CD8-positive, alpha-beta T cell (primary cell): ENCODE measurements at regions of chr16 and their contacts with region 1.

Region 1: GRCh38 chr16:3400779-3401688 is at the starts of genes ZNF174 and ZSCAN32:
- DNase-seq: peak; percentile 96 to 100 (median 99)
- ATAC-seq: peak; percentile 97
- H3K4me3 ChIP-seq: peak within 1 kb of the TSS; percentile 64 to 89
- H3K4me3 Mint-ChIP-seq: peak within 1 kb of the TSS; percentile 88
- H3K27ac ChIP-seq: peak within 1 kb of the TSS; percentile 77 to 81
- H3K27ac Mint-ChIP-seq: peak within 1 kb of the TSS; percentile 93
- H3K4me1 ChIP-seq: peaks cover 42% of the 10 kb centered on the region
- H3K4me1 Mint-ChIP-seq: peaks cover 63% of the 10 kb centered on the region
- H3K27me3 ChIP-seq: no peaks in the 10 kb centered on the region
- H3K27me3 Mint-ChIP-seq: no peaks in the 10 kb centered on the region
- CTCF ChIP-seq: no peak
- total RNA-seq, gene ZNF174: 4.5 to 6.4 TPM
- total RNA-seq, gene ZSCAN32: 10.4 to 12.7 TPM

Region 2: GRCh38 chr16:3123986-3124886 is 276.8 kb before region 1 on chr16:
- CTCF ChIA-PET with region 1: interaction called, 5 read pairs
- POLR2A ChIA-PET with region 1: no interaction called
- intact Hi-C with region 1: loop called in 1 of 2 experiments (anchors 1 kb)
- DNase-seq: peak; percentile 88 to 98 (median 97)
- ATAC-seq: peak; percentile 90
- H3K4me3 ChIP-seq: peak overlapping the region; percentile 72 to 89
- H3K4me3 Mint-ChIP-seq: peak overlapping the region; percentile 98
- H3K27ac ChIP-seq: peak overlapping the region; percentile 44 to 72
- H3K27ac Mint-ChIP-seq: peak overlapping the region; percentile 95
- H3K4me1 ChIP-seq: peaks cover 30% of the 10 kb centered on the region
- H3K4me1 Mint-ChIP-seq: peaks cover 45% of the 10 kb centered on the region
- H3K27me3 ChIP-seq: no peaks in the 10 kb centered on the region
- H3K27me3 Mint-ChIP-seq: no peaks in the 10 kb centered on the region
- CTCF ChIP-seq: no peak

Region 3: DNA sequence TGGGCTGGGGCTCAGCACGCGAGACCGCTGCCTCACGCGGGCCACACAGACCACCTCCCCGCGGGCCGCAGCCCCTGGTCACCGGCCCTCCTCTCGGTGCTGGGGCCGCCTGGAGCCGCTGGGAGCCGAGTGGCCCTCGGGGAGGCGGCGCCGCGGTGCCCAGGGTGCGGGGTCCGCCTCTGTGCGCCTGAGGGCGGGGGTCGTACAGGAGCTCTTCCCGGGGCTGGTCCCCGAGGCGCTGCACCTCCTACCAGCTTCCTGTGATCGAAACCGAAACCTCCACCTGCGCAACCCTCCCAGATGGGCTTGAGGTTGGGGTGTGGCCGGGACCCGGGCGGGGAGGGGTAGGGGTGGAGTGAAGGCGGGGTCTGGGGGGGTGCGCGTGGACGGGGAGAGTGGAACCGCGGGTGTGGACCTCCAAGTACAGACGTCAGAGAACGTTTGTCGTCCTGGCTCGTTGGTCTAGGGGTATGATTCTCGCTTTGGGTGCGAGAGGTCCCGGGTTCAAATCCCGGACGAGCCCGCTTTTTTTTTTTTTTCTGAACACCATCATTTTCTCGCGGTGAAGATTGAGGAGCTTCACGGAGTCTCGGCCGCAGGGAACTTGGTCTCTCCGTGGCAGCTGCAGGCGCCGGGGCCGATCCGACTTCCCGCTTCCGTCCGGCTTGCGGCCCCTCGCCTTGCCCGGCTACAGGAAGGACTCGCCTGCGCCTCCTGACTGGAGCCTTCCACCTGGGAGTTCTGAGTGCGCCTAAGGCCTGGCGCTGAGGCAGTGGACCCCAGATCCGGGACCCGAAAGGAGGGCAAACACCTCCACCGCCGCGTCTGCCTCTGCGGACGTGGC is 242.3 kb before region 1 on chr16:
- CTCF ChIA-PET with region 1: no interaction called
- POLR2A ChIA-PET with region 1: interaction called, 8 read pairs
- intact Hi-C with region 1: loop called in 1 of 2 experiments (anchors 2 kb)
- DNase-seq: peak; percentile 91 to 98 (median 95)
- ATAC-seq: peak; percentile 91
- H3K4me3 ChIP-seq: peak overlapping the region; percentile 80 to 97
- H3K4me3 Mint-ChIP-seq: peak overlapping the region; percentile 90
- H3K27ac ChIP-seq: peak overlapping the region; percentile 70 to 78
- H3K27ac Mint-ChIP-seq: peak overlapping the region; percentile 94
- H3K4me1 ChIP-seq: peaks cover 23% of the 10 kb centered on the region
- H3K4me1 Mint-ChIP-seq: peaks cover 15% of the 10 kb centered on the region
- H3K27me3 ChIP-seq: no peaks in the 10 kb centered on the region
- H3K27me3 Mint-ChIP-seq: no peaks in the 10 kb centered on the region
- CTCF ChIP-seq: no peak

Region 4: DNA sequence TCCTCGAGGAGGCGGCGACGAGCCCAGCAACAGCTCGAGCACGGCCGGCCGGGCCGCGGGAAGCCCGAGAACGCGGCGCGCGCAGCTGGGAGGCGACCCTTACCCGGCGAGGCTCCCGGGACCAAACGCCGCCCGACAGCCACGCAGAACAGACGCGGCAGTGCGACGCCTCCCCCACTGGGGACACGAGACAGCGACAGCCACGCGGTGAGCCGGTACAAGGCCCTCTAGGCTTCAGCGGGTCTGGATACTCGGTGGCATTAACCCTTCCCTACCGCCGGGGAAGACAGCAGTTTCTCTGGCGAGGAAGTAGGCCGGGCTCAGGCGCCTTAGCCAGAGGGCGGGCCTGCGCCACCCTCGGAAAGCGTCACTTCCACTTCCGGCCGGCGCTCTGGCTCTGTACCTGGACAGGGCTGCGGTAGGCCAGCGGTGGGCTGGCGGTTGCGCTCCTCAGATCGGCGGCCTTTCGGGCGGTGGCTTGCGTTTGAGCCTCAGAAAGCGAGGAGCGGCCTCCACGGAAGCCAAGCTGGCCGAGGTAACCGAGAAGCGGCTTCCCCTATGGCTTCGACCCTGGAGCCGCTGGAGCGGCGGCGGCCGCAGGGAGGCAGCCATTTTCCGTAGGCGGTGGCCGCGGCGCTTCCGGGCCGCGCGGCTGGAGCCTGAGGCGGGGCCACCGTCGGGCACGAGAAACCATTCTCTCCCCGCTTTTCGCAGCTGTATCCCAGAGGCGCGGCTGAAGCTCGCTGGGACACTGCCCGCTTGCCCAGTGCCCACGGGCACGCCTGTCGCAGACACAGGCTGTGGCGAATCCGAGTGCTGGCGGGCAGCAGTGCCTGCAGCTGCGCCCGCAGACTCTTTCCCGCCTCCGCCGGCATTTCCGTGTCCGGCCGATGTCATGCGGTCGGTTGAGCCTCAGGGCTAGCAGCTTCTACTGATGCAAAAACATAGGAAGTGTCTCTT is 95.6 kb before region 1 on chr16 and contains the starts of genes TIGD7 and ZNF75A:
- CTCF ChIA-PET with region 1: no interaction called
- POLR2A ChIA-PET with region 1: interaction called, 7 read pairs
- intact Hi-C with region 1: loop called (anchors 1 kb)
- DNase-seq: peak; percentile 60 to 94 (median 83)
- ATAC-seq: peak; percentile 97
- H3K4me3 ChIP-seq: peak within 1 kb of the TSS; percentile 90 to 93
- H3K4me3 Mint-ChIP-seq: peak within 1 kb of the TSS; percentile 83
- H3K27ac ChIP-seq: peak within 1 kb of the TSS; percentile 86 to 91
- H3K27ac Mint-ChIP-seq: peak within 1 kb of the TSS; percentile 90
- H3K4me1 ChIP-seq: peaks cover 14% of the 10 kb centered on the region
- H3K4me1 Mint-ChIP-seq: peaks cover 30% of the 10 kb centered on the region
- H3K27me3 ChIP-seq: no peaks in the 10 kb centered on the region
- H3K27me3 Mint-ChIP-seq: no peaks in the 10 kb centered on the region
- CTCF ChIP-seq: no peak
- total RNA-seq, gene TIGD7: 4.1 to 4.2 TPM
- total RNA-seq, gene ZNF75A: 59.6 to 61.3 TPM

Region 5: DNA sequence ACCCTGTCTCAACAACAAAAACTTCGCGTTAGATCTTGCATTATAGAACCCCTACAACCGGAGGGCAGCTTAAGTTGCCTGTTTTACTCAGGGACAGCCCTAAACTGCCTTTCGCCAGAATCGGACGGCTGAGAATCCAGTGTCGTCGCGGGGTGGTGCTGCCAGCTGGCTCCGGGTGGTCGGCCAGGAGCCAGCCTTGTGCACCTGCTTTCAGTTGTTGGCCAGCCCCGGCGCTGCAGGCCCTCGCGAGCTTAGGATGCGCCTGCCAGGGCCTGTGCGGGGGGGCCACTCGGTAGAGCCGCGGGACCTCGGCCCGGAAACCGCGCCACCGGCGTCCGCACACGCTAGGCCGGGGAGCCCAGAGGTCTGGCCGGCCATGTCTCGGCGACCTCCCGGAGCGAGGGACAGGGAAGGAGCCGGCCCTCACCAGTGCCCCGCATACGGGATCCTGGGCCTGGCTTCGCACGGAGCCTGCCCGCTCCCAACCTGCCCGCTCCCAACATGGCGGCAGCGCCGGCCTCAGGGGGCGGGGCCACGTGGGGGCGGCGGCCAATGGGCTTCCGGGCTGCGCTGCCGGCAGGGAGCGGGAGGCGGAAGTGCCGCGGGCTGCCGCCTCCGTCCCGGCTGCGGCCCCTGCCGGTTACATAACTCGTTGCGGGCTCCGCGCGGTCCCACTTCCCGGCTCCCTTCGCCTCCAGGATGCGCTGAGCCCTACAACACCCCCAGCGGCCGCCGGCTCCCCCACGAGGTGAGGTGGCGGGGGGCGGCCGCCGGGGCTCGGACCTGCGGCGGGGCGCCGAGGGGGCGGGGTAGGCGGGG is 56.6 kb after region 1 on chr16:
- CTCF ChIA-PET with region 1: no interaction called
- POLR2A ChIA-PET with region 1: interaction called, 13 read pairs
- intact Hi-C with region 1: loop called (anchors 1 kb)
- DNase-seq: peak; percentile 78 to 96 (median 90)
- ATAC-seq: peak; percentile 84
- H3K4me3 ChIP-seq: peak overlapping the region; percentile 71 to 72
- H3K4me3 Mint-ChIP-seq: peak overlapping the region; percentile 85
- H3K27ac ChIP-seq: peak overlapping the region; percentile 76 to 89
- H3K27ac Mint-ChIP-seq: peak overlapping the region; percentile 93
- H3K4me1 ChIP-seq: peaks cover 42% of the 10 kb centered on the region
- H3K4me1 Mint-ChIP-seq: peaks cover 52% of the 10 kb centered on the region
- H3K27me3 ChIP-seq: no peaks in the 10 kb centered on the region
- H3K27me3 Mint-ChIP-seq: no peaks in the 10 kb centered on the region
- CTCF ChIP-seq: peak; percentile 49

Region 6: GRCh38 chr16:3717235-3718018 is 316.4 kb after region 1 on chr16 and contains the start of gene TRAP1:
- CTCF ChIA-PET with region 1: no interaction called
- POLR2A ChIA-PET with region 1: interaction called, 3 read pairs
- intact Hi-C with region 1: loop called in 1 of 2 experiments (anchors 2 kb)
- DNase-seq: peak; percentile 85 to 96 (median 91)
- ATAC-seq: peak; percentile 97
- H3K4me3 ChIP-seq: peak within 1 kb of the TSS; percentile 94 to 96
- H3K4me3 Mint-ChIP-seq: peak within 1 kb of the TSS; percentile 91
- H3K27ac ChIP-seq: peak within 1 kb of the TSS; percentile 84 to 88
- H3K27ac Mint-ChIP-seq: peak within 1 kb of the TSS; percentile 92
- H3K4me1 ChIP-seq: peaks cover 15% of the 10 kb centered on the region
- H3K4me1 Mint-ChIP-seq: peaks cover 38% of the 10 kb centered on the region
- H3K27me3 ChIP-seq: no peaks in the 10 kb centered on the region
- H3K27me3 Mint-ChIP-seq: no peaks in the 10 kb centered on the region
- CTCF ChIP-seq: no peak
- total RNA-seq, gene TRAP1: 48.3 to 57.4 TPM